Activated CD8-positive, alpha-beta T cell treated with anti-CD3 and anti-CD28 coated beads for 36 hours (primary cell): ENCODE measurements at regions of chr4 and their contacts with region 1.

Region 1: GRCh38 chr4:77600521-77601451 is 4.8 kb upstream of the CXCL13 start:
- DNase-seq: peak; percentile 60
- ATAC-seq: peak; percentile 64
- H3K4me3 Mint-ChIP-seq: no peak overlapping the region
- H3K27ac Mint-ChIP-seq: no peak overlapping the region
- H3K4me1 Mint-ChIP-seq: peaks cover 4% of the 10 kb centered on the region
- H3K27me3 Mint-ChIP-seq: peaks cover 28% of the 10 kb centered on the region
- CTCF ChIP-seq: peak; percentile 96

Region 2: GRCh38 chr4:77358315-77358928 is 242.4 kb before region 1 on chr4:
- CTCF ChIA-PET with region 1: interaction called, 13 read pairs
- POLR2A ChIA-PET with region 1: no interaction called
- intact Hi-C with region 1: no loop called
- DNase-seq: peak; percentile 13
- ATAC-seq: peak; percentile 62
- H3K4me3 Mint-ChIP-seq: no peak overlapping the region
- H3K27ac Mint-ChIP-seq: no peak overlapping the region
- H3K4me1 Mint-ChIP-seq: no peaks in the 10 kb centered on the region
- H3K27me3 Mint-ChIP-seq: peaks cover 4% of the 10 kb centered on the region
- CTCF ChIP-seq: peak; percentile 72

Region 3: GRCh38 chr4:77385124-77385969 is 215.4 kb before region 1 on chr4:
- CTCF ChIA-PET with region 1: interaction called, 49 read pairs
- POLR2A ChIA-PET with region 1: no interaction called
- intact Hi-C with region 1: loop called (anchors 5 kb)
- DNase-seq: peak; percentile 73
- ATAC-seq: peak; percentile 73
- H3K4me3 Mint-ChIP-seq: no peak overlapping the region
- H3K27ac Mint-ChIP-seq: no peak overlapping the region
- H3K4me1 Mint-ChIP-seq: no peaks in the 10 kb centered on the region
- H3K27me3 Mint-ChIP-seq: no peaks in the 10 kb centered on the region
- CTCF ChIP-seq: peak; percentile 74

Region 4: GRCh38 chr4:77433418-77433733 is 167.4 kb before region 1 on chr4:
- CTCF ChIA-PET with region 1: interaction called, 17 read pairs
- POLR2A ChIA-PET with region 1: no interaction called
- intact Hi-C with region 1: no loop called
- DNase-seq: peak; percentile 20
- ATAC-seq: peak; percentile 84
- H3K4me3 Mint-ChIP-seq: no peak overlapping the region
- H3K27ac Mint-ChIP-seq: no peak overlapping the region
- H3K4me1 Mint-ChIP-seq: peaks cover 11% of the 10 kb centered on the region
- H3K27me3 Mint-ChIP-seq: no peaks in the 10 kb centered on the region
- CTCF ChIP-seq: peak; percentile 67

Region 5: DNA sequence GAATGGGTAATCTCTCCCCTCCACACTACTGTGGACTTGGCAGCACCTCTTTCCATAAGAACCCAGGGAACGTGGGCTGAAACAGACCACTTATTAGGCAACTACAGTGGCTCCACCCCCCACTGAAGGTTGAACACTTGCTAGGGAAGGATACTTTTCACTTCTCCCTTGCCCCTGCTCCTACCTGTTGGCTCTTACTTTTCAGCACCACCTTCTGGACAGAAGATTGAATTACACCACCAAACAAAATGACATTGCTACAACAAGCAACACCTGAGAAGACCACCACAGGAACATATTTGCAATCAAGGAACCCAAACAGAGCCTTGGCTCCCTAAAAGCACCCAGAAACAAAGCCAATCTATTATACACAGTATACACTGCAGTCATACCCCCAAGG is 127.3 kb before region 1 on chr4:
- CTCF ChIA-PET with region 1: interaction called, 53 read pairs
- POLR2A ChIA-PET with region 1: interaction called, 3 read pairs
- intact Hi-C with region 1: loop called (anchors 5 kb)
- DNase-seq: no peak
- ATAC-seq: no peak
- H3K4me3 Mint-ChIP-seq: no peak overlapping the region
- H3K27ac Mint-ChIP-seq: no peak overlapping the region
- H3K4me1 Mint-ChIP-seq: no peaks in the 10 kb centered on the region
- H3K27me3 Mint-ChIP-seq: peaks cover 32% of the 10 kb centered on the region
- CTCF ChIP-seq: peak; percentile 57

Region 6: GRCh38 chr4:77579406-77580076 is 21.2 kb before region 1 on chr4:
- CTCF ChIA-PET with region 1: interaction called, 38 read pairs
- POLR2A ChIA-PET with region 1: no interaction called
- intact Hi-C with region 1: no loop called
- DNase-seq: no peak
- ATAC-seq: peak; percentile 37
- H3K4me3 Mint-ChIP-seq: no peak overlapping the region
- H3K27ac Mint-ChIP-seq: no peak overlapping the region
- H3K4me1 Mint-ChIP-seq: peaks cover 19% of the 10 kb centered on the region
- H3K27me3 Mint-ChIP-seq: peaks cover 14% of the 10 kb centered on the region
- CTCF ChIP-seq: no peak

Region 7: DNA sequence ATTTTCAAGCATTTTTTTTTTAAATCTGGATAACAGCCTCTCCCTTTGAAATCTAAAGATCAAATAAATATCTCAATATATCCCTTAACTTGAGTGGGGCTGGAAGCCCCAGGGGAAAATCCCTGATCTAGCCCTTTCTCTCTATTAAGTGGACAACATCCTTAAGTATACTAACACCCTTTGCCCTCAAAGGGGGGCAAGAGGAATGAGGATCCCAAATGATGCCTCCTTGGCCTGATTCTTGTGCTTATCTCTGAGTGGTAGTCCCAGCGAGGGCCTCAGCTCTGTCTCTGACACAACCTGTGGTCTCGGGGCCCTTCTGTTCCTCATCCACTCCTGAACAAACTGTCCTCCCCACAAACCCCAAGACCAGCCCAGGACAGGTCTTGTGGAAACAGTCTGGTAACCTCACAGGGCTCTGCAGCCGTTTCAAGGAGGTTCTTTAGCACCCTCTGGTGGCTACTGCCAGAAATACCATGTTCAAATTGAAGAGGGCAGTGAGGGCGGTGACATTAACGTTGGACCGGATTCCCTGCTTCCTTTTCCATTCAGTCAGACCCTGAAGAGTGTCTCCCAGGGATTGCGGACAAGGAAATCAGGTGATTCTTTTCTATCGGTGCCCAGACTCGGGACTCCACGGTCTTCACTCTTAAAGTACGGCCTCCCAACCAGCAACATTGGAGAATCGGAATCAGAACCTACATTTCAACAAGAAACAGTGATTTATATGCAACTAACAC is 17.8 kb after region 1 on chr4:
- CTCF ChIA-PET with region 1: interaction called, 147 read pairs
- POLR2A ChIA-PET with region 1: interaction called, 4 read pairs
- intact Hi-C with region 1: no loop called
- DNase-seq: peak; percentile 79
- ATAC-seq: peak; percentile 93
- H3K4me3 Mint-ChIP-seq: no peak overlapping the region
- H3K27ac Mint-ChIP-seq: no peak overlapping the region
- H3K4me1 Mint-ChIP-seq: peaks cover 6% of the 10 kb centered on the region
- H3K27me3 Mint-ChIP-seq: peaks cover 15% of the 10 kb centered on the region
- CTCF ChIP-seq: peak; percentile 85

Region 8: GRCh38 chr4:78047366-78047765 is 446.6 kb after region 1 on chr4:
- CTCF ChIA-PET with region 1: no interaction called
- POLR2A ChIA-PET with region 1: no interaction called
- intact Hi-C with region 1: no loop called
- DNase-seq: no peak
- ATAC-seq: no peak
- H3K4me3 Mint-ChIP-seq: no peak overlapping the region
- H3K27ac Mint-ChIP-seq: no peak overlapping the region
- H3K4me1 Mint-ChIP-seq: no peaks in the 10 kb centered on the region
- H3K27me3 Mint-ChIP-seq: peaks cover 2% of the 10 kb centered on the region
- CTCF ChIP-seq: no peak